Breast epithelium (tissue), 4 donors: ENCODE measurements at regions of chr18 and their contacts with region 1.

Region 1: GRCh38 chr18:33821503-33821902 is 243.5 kb downstream of the ASXL3 start:
- DNase-seq: no peak
- H3K4me3 ChIP-seq: no peak overlapping the region
- H3K27ac ChIP-seq: no peak overlapping the region
- H3K4me1 ChIP-seq: no peaks in the 10 kb centered on the region
- H3K27me3 ChIP-seq: no peaks in the 10 kb centered on the region
- CTCF ChIP-seq: no peak
- POLR2A ChIP-seq: no peak

Region 2: GRCh38 chr18:31983020-31983419 is 1838.5 kb before region 1 on chr18:
- intact Hi-C with region 1: no loop called
- DNase-seq: no peak
- H3K4me3 ChIP-seq: no peak overlapping the region
- H3K27ac ChIP-seq: peak overlapping the region in 1 of 2 donors; percentile 44
- H3K4me1 ChIP-seq: no peaks in the 10 kb centered on the region
- H3K27me3 ChIP-seq: no peaks in the 10 kb centered on the region
- CTCF ChIP-seq: no peak
- POLR2A ChIP-seq: no peak

Region 3: GRCh38 chr18:33833847-33834246 is 12.3 kb after region 1 on chr18:
- intact Hi-C with region 1: loop called (anchors 1 kb)
- DNase-seq: no peak
- H3K4me3 ChIP-seq: no peak overlapping the region
- H3K27ac ChIP-seq: no peak overlapping the region
- H3K4me1 ChIP-seq: no peaks in the 10 kb centered on the region
- H3K27me3 ChIP-seq: no peaks in the 10 kb centered on the region
- CTCF ChIP-seq: no peak
- POLR2A ChIP-seq: no peak